Posterior cingulate gyrus (tissue), 11 donors: ENCODE measurements at regions of chr7 and their contacts with region 1.

Region 1: DNA sequence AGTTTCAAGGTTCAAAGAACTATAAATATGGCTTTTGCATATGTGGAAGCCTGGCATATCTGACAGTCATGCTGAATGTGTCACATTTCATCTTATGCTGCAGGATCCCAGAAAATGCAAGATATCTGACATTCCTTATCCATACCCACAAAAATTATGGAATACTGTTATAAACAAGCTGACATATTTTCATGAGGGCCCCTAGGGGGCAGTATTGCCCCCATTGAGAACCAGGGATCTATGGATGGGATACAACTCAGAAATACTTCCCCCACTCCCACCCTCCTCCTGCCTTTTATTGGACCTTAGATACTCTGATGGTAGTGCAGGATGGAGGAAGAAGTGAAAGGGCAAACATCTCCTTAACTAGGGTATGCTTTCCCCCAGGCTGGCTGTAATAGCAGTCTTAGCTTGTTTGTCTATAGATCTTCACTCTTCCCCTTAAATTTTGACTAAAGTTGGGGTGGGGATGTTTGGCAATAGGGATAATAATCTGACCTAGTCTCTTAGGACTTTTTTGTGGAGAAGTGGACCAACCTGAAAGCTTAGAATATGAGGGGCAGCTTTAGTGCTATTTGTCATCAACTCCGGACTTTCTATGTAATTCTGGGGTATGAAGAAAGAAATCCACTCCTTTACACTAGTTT is 3.5 kb upstream of the GNGT1 start:
- DNase-seq: no peak

Region 2: DNA sequence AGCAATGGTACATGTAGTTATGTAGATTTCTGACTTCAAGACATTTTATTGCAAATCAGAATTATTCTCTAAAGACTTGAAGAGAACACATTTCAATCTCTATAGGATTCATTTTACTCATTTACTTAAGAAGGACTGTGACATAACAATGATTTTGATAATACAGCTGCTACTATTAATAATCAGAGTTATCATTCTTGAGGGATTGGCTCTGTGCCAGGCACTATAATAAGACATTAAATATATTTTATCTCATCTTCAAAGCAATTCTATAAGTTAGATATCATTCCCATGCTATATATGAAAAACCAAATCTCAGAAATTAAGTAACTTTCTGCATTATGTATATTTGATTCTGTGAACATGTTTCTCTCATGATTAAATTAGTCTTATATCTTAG is 224.7 kb before region 1 on chr7:
- intact Hi-C with region 1: no loop called
- DNase-seq: no peak

Region 3: GRCh38 chr7:94087664-94088352 is 184.9 kb after region 1 on chr7:
- intact Hi-C with region 1: loop called (anchors 2 kb)
- DNase-seq: peak in 2 of 10 donors; percentile 16 to 27

Region 4: DNA sequence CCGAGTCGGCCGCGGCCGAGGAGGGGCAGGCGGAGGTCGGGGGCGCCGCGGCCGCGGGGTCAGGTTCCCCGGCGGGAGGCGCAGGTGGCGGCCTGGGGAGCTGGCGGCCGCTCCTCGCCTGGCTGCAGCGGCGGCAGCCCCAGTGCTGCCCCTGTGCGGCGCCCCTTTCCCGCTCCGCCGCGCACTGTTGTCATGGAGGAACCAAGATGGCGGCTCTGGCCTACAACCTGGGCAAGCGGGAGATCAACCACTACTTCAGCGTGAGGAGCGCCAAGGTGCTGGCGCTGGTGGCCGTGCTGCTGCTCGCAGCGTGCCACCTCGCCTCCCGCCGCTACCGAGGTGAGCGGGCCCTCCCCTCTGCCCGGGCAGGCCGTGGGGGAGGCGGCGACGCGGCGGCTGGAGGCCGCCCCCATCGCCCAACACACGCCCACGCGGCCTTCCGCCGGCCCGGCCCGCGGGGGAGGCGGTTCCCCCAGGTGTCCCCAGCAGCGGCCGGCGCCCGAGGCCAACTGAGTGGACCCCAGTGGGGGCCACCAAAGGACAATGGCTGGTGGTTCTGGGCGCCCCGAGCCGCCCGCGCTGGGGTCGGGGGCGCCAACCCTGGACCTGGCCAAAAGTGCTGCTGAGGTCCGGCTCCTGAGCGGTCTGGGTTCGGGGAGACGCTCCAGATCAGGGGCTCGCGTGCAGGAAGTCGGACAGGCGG is 607.1 kb after region 1 on chr7:
- intact Hi-C with region 1: no loop called
- DNase-seq: peak; percentile 59 to 95 (median 70)